ENCODE measurements at regions of chr11 and their contacts with region 1.

Region 1: DNA sequence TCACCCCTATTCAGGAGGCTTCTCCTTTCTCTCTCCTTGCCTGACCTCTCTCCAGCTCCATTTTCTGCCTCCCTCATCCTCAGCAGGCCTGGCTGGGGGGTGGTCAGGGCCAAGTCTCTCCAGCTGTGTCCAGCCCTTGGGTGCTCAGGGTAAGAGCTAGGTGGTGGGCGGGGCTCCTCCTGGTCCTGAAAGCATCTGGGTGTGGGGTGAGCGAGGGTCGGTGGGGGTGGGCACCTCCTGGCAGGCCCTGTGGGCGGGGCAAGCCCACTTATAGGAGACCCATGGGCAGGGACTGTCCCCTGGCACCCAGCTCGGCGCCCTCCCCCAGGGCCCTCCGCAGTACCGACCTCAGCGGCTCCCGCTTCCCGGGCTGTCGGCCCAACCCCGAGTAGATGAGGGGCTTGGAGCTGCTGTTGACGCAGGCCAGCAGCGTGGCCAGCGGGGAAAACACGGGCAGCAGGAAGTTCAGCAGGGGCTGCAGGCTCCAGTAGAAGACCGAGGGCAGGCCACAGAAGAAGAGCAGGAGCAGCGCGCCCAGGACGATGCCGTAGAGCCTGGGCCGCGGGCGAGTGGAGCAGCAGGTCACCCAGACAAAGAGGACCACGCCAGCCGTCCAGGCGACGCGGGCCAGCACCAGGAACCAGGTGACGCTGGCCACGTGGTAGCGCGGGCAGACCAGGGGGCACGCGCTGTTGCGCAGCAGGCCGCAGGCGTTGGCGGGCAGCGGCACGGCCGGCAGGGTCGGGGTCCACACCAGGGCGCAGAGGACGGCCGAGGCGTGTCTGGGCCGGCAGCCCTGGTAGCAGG is 734 bp downstream of the MRGPRG start:
- DNase-seq: no peak
- ATAC-seq: no peak; the same call in 2 of the 3 replicates
- H3K4me3 ChIP-seq: no peak overlapping the region
- H3K27ac ChIP-seq: no peak overlapping the region
- H3K4me1 ChIP-seq: peaks cover 13 to 75% of the 10 kb centered on the region in 2 experiments; a peak in 4 of 5 replicates
- H3K27me3 ChIP-seq: peaks cover 0 to 7% of the 10 kb centered on the region in 2 experiments; a peak in 1 of 5 replicates
- CTCF ChIP-seq: no peak
- EP300 ChIP-seq: no peak
- POLR2A ChIP-seq: no peak
- RAD21 ChIP-seq: no peak

Region 2: GRCh38 chr11:3037040-3037944 is 180.6 kb before region 1 on chr11:
- CTCF ChIA-PET with region 1: interaction called, 11 read pairs
- POLR2A ChIA-PET with region 1: no interaction called
- in situ Hi-C with region 1: no loop called
- intact Hi-C with region 1: loop called (anchors 5 kb)
- DNase-seq: peak; percentile 58 to 81 (median 62)
- ATAC-seq: peak; percentile 95
- H3K4me3 ChIP-seq: no peak overlapping the region
- H3K27ac ChIP-seq: no peak overlapping the region
- H3K4me1 ChIP-seq: no peaks in the 10 kb centered on the region; a peak in 1 of 5 replicates
- H3K27me3 ChIP-seq: no peaks in the 10 kb centered on the region
- CTCF ChIP-seq: peak; percentile 83 to 88 (median 88)
- EP300 ChIP-seq: no peak
- POLR2A ChIP-seq: no peak
- RAD21 ChIP-seq: peak; percentile 74 to 80

Region 3: GRCh38 chr11:3109921-3110706 is 107.8 kb before region 1 on chr11:
- CTCF ChIA-PET with region 1: interaction called, 16 read pairs
- POLR2A ChIA-PET with region 1: no interaction called
- in situ Hi-C with region 1: loop called (anchors 5 kb)
- intact Hi-C with region 1: loop called (anchors 1 kb)
- DNase-seq: peak; percentile 80 to 95 (median 92)
- ATAC-seq: peak; percentile 99
- H3K4me3 ChIP-seq: no peak overlapping the region
- H3K27ac ChIP-seq: no peak overlapping the region
- H3K4me1 ChIP-seq: peaks cover 2 to 10% of the 10 kb centered on the region in 2 experiments; a peak in 3 of 5 replicates
- H3K27me3 ChIP-seq: no peaks in the 10 kb centered on the region
- CTCF ChIP-seq: peak; percentile 90 to 97 (median 92)
- EP300 ChIP-seq: no peak
- POLR2A ChIP-seq: no peak
- RAD21 ChIP-seq: peak; percentile 75 to 90

Region 4: DNA sequence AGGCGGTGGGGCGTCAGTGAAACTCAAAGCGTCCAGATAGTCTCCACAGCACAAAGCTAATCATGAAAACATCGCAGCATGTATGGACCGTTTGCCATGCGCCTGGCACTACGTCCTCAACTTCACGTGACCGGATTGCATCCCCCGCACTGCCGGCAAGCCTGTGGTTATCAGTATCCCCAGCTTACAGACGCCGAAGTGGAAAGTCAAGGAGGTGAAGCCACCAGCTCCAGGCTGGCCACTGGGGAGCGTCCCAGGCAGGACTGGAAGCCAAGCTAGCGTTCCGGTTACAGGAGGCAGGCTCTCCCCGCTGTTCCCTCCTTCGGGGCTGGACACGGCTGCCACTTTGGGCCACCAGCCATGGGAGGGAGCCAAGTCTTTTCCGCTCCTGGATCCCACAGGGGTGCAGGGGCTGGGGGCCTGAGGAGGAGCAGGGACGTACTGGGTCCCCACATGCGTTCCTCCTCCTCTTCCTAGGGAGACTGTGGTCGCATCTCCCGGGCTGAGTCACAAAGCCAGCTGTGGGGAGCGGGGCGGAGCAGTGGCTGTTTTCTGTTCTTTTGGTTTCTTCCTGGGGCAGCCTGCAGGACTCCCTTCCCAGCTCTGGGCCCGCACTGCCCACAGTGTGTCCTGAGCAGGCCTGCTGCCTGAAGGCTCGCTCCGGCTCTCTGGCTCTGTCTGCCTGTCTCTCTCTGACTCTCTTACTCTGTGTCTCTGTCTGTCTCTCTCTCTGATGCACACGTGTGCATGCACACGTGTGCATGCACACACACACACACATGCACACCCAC is 48.4 kb before region 1 on chr11:
- CTCF ChIA-PET with region 1: no interaction called
- POLR2A ChIA-PET with region 1: interaction called, 7 read pairs
- in situ Hi-C with region 1: no loop called
- intact Hi-C with region 1: loop called (anchors 2 kb)
- DNase-seq: peak; percentile 80 to 96 (median 85)
- ATAC-seq: peak; percentile 89
- H3K4me3 ChIP-seq: peak overlapping the region; percentile 19
- H3K27ac ChIP-seq: peak overlapping the region; percentile 72
- H3K4me1 ChIP-seq: peaks cover 25 to 64% of the 10 kb centered on the region in 2 experiments
- H3K27me3 ChIP-seq: no peaks in the 10 kb centered on the region; a peak in 1 of 5 replicates
- CTCF ChIP-seq: peak; percentile 61 to 72 (median 63)
- EP300 ChIP-seq: peak; percentile 89
- POLR2A ChIP-seq: peak; percentile 66
- RAD21 ChIP-seq: peak; percentile 40 to 65

Region 5: DNA sequence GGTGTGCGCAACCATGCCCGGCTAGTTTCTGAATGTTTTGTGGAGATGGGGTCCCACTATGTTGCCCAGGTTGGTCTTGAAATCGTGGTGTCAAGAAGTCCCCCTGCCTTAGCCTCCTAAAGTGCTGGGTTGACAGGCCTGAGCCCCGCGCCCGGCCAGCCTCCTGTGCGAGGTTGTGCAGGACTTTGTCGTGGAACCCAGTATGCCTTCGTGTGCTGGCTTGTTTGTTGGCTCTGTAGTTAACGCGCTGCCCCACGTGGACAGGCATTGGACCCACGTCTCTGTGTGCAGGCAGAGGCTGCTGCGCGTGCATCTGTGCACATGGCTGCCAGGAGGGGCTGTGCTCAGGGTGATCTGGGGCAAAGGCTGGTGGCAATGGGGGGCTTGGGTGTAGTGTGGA is 195.0 kb after region 1 on chr11:
- CTCF ChIA-PET with region 1: no interaction called
- POLR2A ChIA-PET with region 1: no interaction called
- in situ Hi-C with region 1: no loop called
- intact Hi-C with region 1: loop called (anchors 5 kb)
- DNase-seq: no peak
- ATAC-seq: no peak
- H3K4me3 ChIP-seq: no peak overlapping the region
- H3K27ac ChIP-seq: no peak overlapping the region
- H3K4me1 ChIP-seq: peaks cover 0 to 10% of the 10 kb centered on the region in 2 experiments; a peak in 2 of 5 replicates
- H3K27me3 ChIP-seq: no peaks in the 10 kb centered on the region
- CTCF ChIP-seq: no peak
- EP300 ChIP-seq: no peak
- POLR2A ChIP-seq: no peak
- RAD21 ChIP-seq: no peak